HEK293T (cell line): ENCODE measurements at regions of chr11 and their contacts with region 1.

Region 1: GRCh38 chr11:116835791-116836631 is 1.4 kb downstream of the APOA1 start:
- DNase-seq: peak; percentile 93

Region 2: DNA sequence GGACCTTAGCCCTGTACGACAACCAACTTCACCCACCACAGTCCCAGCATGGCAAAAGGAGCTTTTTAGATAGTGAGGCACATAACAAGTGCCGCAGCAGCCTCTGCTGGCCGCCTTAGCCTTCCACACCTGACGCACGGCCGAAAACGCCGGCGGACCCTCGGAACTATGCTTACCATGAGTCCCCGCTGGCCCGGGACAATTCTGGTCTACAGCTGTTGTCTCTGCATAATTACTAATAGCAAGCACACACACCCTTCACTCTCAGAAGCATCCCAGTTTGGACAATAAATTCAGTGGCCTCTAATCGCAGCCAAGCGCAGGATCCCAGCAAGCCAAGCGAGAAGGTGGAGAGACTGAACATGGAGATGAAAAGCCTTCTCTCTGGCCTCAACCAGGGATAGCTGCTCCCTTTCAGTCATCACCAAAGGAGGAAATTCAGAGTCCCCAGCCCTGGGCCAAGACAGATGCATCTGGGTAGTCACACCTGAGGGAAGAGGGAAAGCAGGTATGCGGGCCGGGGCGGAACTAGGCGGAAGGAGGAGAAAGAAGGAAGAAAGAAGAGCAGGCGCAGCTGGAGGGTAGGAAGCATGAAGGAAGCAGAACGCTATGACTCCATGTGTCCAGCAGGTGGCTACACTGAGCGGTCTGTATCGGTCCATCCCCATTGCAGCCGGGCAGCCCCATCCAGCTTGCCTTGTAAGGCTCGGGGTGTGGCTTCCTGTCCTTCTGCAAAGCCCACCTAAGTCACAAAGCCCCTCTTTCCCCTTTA is 103.6 kb before region 1 on chr11:
- CTCF ChIA-PET with region 1: interaction called, 11 read pairs
- POLR2A ChIA-PET with region 1: no interaction called
- DNase-seq: peak; percentile 87

Region 3: GRCh38 chr11:116787786-116788486 is 48.1 kb before region 1 on chr11 and contains the start of gene ZPR1:
- CTCF ChIA-PET with region 1: interaction called, 56 read pairs
- POLR2A ChIA-PET with region 1: interaction called, 28 read pairs
- DNase-seq: peak; percentile 79

Region 4: GRCh38 chr11:116792869-116793771 is 42.9 kb before region 1 on chr11:
- CTCF ChIA-PET with region 1: interaction called, 56 read pairs
- POLR2A ChIA-PET with region 1: interaction called, 28 read pairs
- DNase-seq: no peak

Region 5: GRCh38 chr11:116800610-116801009 is 35.4 kb before region 1 on chr11:
- CTCF ChIA-PET with region 1: interaction called, 11 read pairs
- POLR2A ChIA-PET with region 1: interaction called, 3 read pairs
- DNase-seq: no peak

Region 6: DNA sequence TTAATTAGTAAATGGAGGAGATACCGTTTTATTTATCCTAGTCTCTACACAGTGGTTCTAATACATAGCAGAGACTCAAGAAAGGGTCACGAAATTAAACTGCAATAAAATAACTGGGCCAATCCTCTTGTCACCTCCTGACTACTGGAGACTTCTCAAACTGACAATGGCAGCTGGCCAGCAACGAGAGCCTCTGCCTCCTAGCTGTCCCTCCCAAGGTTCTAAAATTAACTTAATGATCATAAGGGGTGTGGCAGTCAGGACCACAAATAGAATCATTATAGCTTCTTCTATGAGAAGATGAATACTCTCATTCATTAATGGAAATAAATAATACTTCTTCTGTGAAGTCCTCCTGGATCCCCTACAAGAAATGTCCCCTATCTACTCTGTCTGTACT is 65.2 kb after region 1 on chr11:
- CTCF ChIA-PET with region 1: no interaction called
- POLR2A ChIA-PET with region 1: no interaction called
- DNase-seq: no peak